OCI-LY7 (cell line): ENCODE measurements at regions of chr1 and their contacts with region 1.

Region 1: GRCh38 chr1:117534995-117535467 is 70.8 kb upstream of the TENT5C start:
- DNase-seq: peak; percentile 85
- H3K4me3 ChIP-seq: no peak overlapping the region
- H3K27ac ChIP-seq: no peak overlapping the region
- H3K4me1 ChIP-seq: peaks cover 35% of the 10 kb centered on the region
- CTCF ChIP-seq: peak; percentile 94

Region 2: GRCh38 chr1:117481410-117481809 is 53.6 kb before region 1 on chr1:
- CTCF ChIA-PET with region 1: interaction called, 12 read pairs
- POLR2A ChIA-PET with region 1: no interaction called
- intact Hi-C with region 1: no loop called
- DNase-seq: no peak
- H3K4me3 ChIP-seq: no peak overlapping the region
- H3K27ac ChIP-seq: no peak overlapping the region
- H3K4me1 ChIP-seq: no peaks in the 10 kb centered on the region
- CTCF ChIP-seq: no peak

Region 3: DNA sequence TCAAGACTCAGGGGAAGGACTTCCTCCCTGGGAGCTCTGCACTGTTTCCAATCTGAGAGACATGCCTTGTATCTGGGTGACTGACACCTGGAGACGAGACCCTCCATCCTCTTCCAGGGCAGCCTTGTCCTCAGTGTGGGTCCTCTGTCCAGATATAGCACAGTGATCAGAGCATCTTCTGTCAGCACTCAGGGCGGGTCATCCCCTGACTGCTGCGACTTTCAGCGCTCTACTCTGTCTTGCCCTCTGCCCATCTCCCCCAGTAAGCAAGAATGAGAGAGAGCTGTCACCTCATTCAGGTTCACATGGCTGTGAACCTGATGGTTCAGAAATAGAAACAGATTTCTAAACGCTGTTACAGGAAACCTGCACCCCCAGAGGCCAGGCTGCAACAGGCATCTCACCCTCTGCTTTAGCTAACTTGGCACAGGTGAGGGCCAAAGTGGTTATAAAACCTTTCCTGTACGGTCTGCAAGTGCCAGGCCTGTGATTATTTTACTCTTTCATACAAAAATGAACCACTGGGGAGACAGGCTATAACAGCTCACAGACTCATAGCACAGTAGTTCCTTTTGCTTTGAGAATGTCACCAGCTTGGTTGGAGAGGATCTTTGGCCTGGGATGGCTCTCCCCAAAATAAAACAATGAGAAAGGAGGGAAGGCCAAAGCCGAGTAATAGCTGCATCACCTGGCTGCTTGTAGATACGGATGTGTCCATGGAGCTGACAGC is 59.4 kb after region 1 on chr1:
- CTCF ChIA-PET with region 1: no interaction called
- POLR2A ChIA-PET with region 1: interaction called, 3 read pairs
- intact Hi-C with region 1: loop called (anchors 2 kb)
- DNase-seq: peak; percentile 67
- H3K4me3 ChIP-seq: no peak overlapping the region
- H3K27ac ChIP-seq: peak overlapping the region; percentile 14
- H3K4me1 ChIP-seq: peaks cover 30% of the 10 kb centered on the region
- CTCF ChIP-seq: peak; percentile 67

Region 4: GRCh38 chr1:117654493-117655219 is 119.6 kb after region 1 on chr1:
- CTCF ChIA-PET with region 1: interaction called, 9 read pairs
- POLR2A ChIA-PET with region 1: interaction called, 6 read pairs
- intact Hi-C with region 1: loop called (anchors 5 kb)
- DNase-seq: peak; percentile 95
- H3K4me3 ChIP-seq: peak overlapping the region; percentile 48
- H3K27ac ChIP-seq: peak overlapping the region; percentile 98
- H3K4me1 ChIP-seq: peaks cover 99% of the 10 kb centered on the region
- CTCF ChIP-seq: no peak

Region 5: GRCh38 chr1:117758444-117759316 is 223.6 kb after region 1 on chr1:
- CTCF ChIA-PET with region 1: interaction called, 32 read pairs
- POLR2A ChIA-PET with region 1: interaction called, 19 read pairs
- intact Hi-C with region 1: loop called (anchors 1 kb)
- DNase-seq: peak; percentile 89
- H3K4me3 ChIP-seq: no peak overlapping the region
- H3K27ac ChIP-seq: no peak overlapping the region
- H3K4me1 ChIP-seq: peaks cover 5% of the 10 kb centered on the region
- CTCF ChIP-seq: peak; percentile 95